Colonic mucosa (tissue), 4 donors: ENCODE measurements at regions of chr7 and their contacts with region 1.

Region 1: DNA sequence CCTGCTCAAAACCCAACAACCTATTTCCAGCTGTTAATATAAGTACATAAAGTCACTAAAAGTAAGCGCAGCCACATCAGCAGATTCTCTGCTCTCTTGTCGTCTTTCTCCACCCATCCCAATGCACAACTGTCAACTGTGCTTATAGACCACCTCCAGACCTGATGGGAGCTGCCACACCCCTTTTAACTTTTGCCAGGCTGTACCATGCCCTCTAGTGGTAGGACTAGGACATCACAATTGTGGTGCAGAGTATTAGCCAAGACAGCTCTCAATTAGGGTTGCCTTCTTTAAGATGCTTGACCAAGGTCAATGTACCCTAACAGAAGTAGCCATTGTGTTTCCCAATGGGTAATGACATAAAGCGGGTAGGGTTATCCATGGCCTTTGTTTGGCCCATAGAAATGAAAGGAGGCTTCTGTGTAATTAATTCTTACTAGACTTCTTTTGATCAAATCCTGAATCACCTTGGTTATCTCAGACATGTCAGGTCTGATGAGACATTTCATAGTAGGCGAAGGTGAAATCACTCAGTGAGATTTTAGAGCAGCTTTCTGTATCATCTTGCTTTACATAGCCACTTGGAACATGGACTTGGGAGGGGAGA is 68.1 kb downstream of the SCRN1 start:
- DNase-seq: peak; percentile 41
- H3K4me3 ChIP-seq: no peak overlapping the region
- H3K27ac ChIP-seq: no peak overlapping the region
- H3K4me1 ChIP-seq: no peaks in the 10 kb centered on the region
- H3K27me3 ChIP-seq: no peaks in the 10 kb centered on the region
- CTCF ChIP-seq: peak; percentile 89

Region 2: DNA sequence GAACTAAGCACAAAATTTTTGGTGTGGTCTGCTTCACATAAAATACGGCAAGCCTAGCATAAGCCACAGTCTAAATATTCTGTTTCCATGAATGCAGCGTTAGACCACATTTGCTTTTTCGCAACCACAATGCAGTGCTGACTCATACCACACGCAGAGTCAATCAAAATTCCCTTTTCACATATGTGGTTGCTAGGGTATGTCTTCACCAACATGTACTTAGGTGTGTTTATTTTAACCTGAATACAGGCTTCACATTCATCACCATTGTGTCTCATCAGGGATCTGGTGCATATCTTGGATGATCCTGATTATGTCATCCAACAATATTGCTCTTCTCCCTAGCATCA is 636.1 kb before region 1 on chr7:
- intact Hi-C with region 1: no loop called
- DNase-seq: no peak
- H3K4me3 ChIP-seq: no peak overlapping the region
- H3K27ac ChIP-seq: no peak overlapping the region
- H3K4me1 ChIP-seq: no peaks in the 10 kb centered on the region
- H3K27me3 ChIP-seq: no peaks in the 10 kb centered on the region
- CTCF ChIP-seq: no peak

Region 3: GRCh38 chr7:29749701-29750321 is 171.7 kb before region 1 on chr7:
- intact Hi-C with region 1: loop called (anchors 5 kb)
- DNase-seq: no peak
- H3K4me3 ChIP-seq: no peak overlapping the region
- H3K27ac ChIP-seq: no peak overlapping the region
- H3K4me1 ChIP-seq: no peaks in the 10 kb centered on the region
- H3K27me3 ChIP-seq: no peaks in the 10 kb centered on the region
- CTCF ChIP-seq: no peak

Region 4: GRCh38 chr7:30647589-30647988 is 726.1 kb after region 1 on chr7:
- intact Hi-C with region 1: no loop called
- DNase-seq: peak; percentile 14
- H3K4me3 ChIP-seq: no peak overlapping the region
- H3K27ac ChIP-seq: no peak overlapping the region
- H3K4me1 ChIP-seq: no peaks in the 10 kb centered on the region
- H3K27me3 ChIP-seq: no peaks in the 10 kb centered on the region
- CTCF ChIP-seq: no peak

Region 5: GRCh38 chr7:30954914-30955313 is 1033.4 kb after region 1 on chr7:
- intact Hi-C with region 1: no loop called
- DNase-seq: no peak
- H3K4me3 ChIP-seq: no peak overlapping the region
- H3K27ac ChIP-seq: no peak overlapping the region
- H3K4me1 ChIP-seq: no peaks in the 10 kb centered on the region
- H3K27me3 ChIP-seq: no peaks in the 10 kb centered on the region
- CTCF ChIP-seq: no peak